Dorsolateral prefrontal cortex (tissue), 120 donors: ENCODE measurements at regions of chr6 and their contacts with region 1.

Region 1: DNA sequence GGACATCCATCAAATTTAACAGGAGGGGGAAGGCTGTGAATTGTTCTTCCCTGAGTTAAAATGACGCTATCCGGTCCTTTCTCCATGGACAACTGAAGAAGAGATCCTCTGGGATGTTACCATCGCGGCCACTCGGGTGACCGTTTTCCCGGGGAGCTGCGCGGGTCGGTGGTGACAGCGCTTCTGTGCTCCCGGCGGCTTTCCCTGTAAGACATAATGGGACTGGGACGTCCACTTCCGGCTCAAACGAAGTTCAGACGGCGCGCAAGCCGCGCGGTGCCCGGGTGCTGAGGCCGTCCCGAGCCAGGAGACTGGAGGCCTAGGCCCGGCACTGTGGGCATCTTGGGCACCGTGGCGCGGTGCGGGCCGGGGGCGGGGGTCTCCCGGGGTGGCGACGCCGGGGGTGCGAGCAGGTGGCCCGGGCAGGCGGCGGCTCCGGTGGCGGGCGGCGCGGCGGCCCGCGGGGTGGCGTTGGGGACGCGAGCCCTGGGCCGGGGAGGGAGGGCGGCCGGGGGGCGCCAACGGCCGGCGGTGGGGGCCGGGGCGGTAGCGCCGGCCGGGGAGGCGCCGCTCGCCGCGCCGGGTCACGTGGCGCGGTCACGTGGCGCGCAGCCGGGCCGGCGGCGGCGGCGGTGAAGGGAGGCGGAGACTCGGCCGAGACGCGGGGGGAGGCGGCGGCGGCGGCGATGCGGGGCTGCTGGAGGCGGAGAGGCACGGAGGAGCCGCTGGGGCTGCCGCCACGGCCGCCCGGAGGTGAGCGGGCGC is 63.6 kb downstream of the GTF2H5 start:
- DNase-seq: peak; percentile 57 to 86 (median 68)
- H3K4me3 ChIP-seq: peak overlapping the region; percentile 57 to 91 (median 79)
- H3K27ac ChIP-seq: peak overlapping the region; percentile 69 to 97 (median 91)
- H3K27me3 ChIP-seq: no peaks in the 10 kb centered on the region
- CTCF ChIP-seq: peak in 9 of 56 donors; percentile 0 to 23 (median 14)

Region 2: GRCh38 chr6:158284007-158284875 is 52.5 kb after region 1 on chr6:
- intact Hi-C with region 1: loop called (anchors 2 kb)
- DNase-seq: peak in 2 of 10 donors; percentile 17 to 26
- H3K4me3 ChIP-seq: peak overlapping the region in 23 of 59 donors; percentile 1 to 37 (median 17)
- H3K27ac ChIP-seq: peak overlapping the region; percentile 47 to 94 (median 89)
- H3K27me3 ChIP-seq: no peaks in the 10 kb centered on the region
- CTCF ChIP-seq: no peak

Region 3: GRCh38 chr6:158377860-158378259 is 146.1 kb after region 1 on chr6:
- intact Hi-C with region 1: loop called (anchors 5 to 10 kb)
- DNase-seq: peak in 2 of 10 donors; percentile 60
- H3K4me3 ChIP-seq: no peak overlapping the region
- H3K27ac ChIP-seq: peak overlapping the region in 56 of 59 donors; percentile 12 to 88 (median 74)
- H3K27me3 ChIP-seq: no peaks in the 10 kb centered on the region
- CTCF ChIP-seq: peak in 2 of 56 donors; percentile 8 to 27

Region 4: GRCh38 chr6:158518191-158519127 is 286.7 kb after region 1 on chr6:
- intact Hi-C with region 1: loop called in 1 of 2 experiments (anchors 5 kb)
- DNase-seq: peak in 9 of 10 donors; percentile 55 to 79 (median 68)
- H3K4me3 ChIP-seq: peak overlapping the region in 57 of 59 donors; percentile 1 to 65 (median 42)
- H3K27ac ChIP-seq: peak overlapping the region in 32 of 59 donors; percentile 1 to 69 (median 36)
- H3K27me3 ChIP-seq: peaks cover 0 to 8% (median 0%) of the 10 kb centered on the region in 45 donors
- CTCF ChIP-seq: peak; percentile 25 to 81 (median 64)

Region 5: GRCh38 chr6:158559895-158560835 is 328.4 kb after region 1 on chr6 and contains the start of gene TMEM181:
- intact Hi-C with region 1: loop called in 1 of 2 experiments (anchors 5 kb)
- DNase-seq: peak; percentile 59 to 90 (median 74)
- H3K4me3 ChIP-seq: peak within 1 kb of the TSS; percentile 71 to 97 (median 88)
- H3K27ac ChIP-seq: peak within 1 kb of the TSS in 58 of 59 donors; percentile 4 to 93 (median 80)
- H3K27me3 ChIP-seq: no peaks in the 10 kb centered on the region
- CTCF ChIP-seq: peak in 26 of 56 donors; percentile 7 to 51 (median 24)
- total RNA-seq, gene TMEM181: 23.4 to 51.6 (median 36.0) TPM

Region 6: GRCh38 chr6:158644231-158645063 is 412.7 kb after region 1 on chr6 and contains the start of gene DYNLT1:
- intact Hi-C with region 1: loop called in 1 of 2 experiments (anchors 5 kb)
- DNase-seq: peak; percentile 72 to 94 (median 82)
- H3K4me3 ChIP-seq: peak within 1 kb of the TSS; percentile 67 to 100 (median 97)
- H3K27ac ChIP-seq: peak within 1 kb of the TSS; percentile 51 to 98 (median 88)
- H3K27me3 ChIP-seq: no peaks in the 10 kb centered on the region
- CTCF ChIP-seq: peak in 19 of 56 donors; percentile 2 to 39 (median 20)
- total RNA-seq, gene DYNLT1: 22.6 to 58.2 (median 34.6) TPM